PC-9 (cell line): ENCODE measurements at regions of chr21 and their contacts with region 1.

Region 1: GRCh38 chr21:16022116-16022515 is 292.3 kb downstream of the USP25 start:
- DNase-seq: no peak
- H3K4me3 ChIP-seq: no peak overlapping the region
- H3K27ac ChIP-seq: no peak overlapping the region
- H3K4me1 ChIP-seq: no peaks in the 10 kb centered on the region
- H3K27me3 ChIP-seq: no peaks in the 10 kb centered on the region
- CTCF ChIP-seq: no peak

Region 2: GRCh38 chr21:15986277-15986676 is 35.8 kb before region 1 on chr21:
- CTCF ChIA-PET with region 1: no interaction called
- POLR2A ChIA-PET with region 1: interaction called, 10 read pairs
- intact Hi-C with region 1: no loop called
- DNase-seq: no peak
- H3K4me3 ChIP-seq: no peak overlapping the region
- H3K27ac ChIP-seq: no peak overlapping the region
- H3K4me1 ChIP-seq: no peaks in the 10 kb centered on the region
- H3K27me3 ChIP-seq: no peaks in the 10 kb centered on the region
- CTCF ChIP-seq: no peak